SK-N-SH (cell line): ENCODE measurements at regions of chr11 and their contacts with region 1.

Region 1: GRCh38 chr11:124875943-124876817 is 10.9 kb downstream of the ROBO3 start:
- DNase-seq: peak; percentile 96
- H3K4me3 ChIP-seq: peak overlapping the region; percentile 73 to 80
- H3K27ac ChIP-seq: peak overlapping the region; percentile 93 to 94
- H3K4me1 ChIP-seq: peaks cover 0 to 17% of the 10 kb centered on the region in 2 experiments; a peak in 1 of 4 replicates
- H3K27me3 ChIP-seq: no peaks in the 10 kb centered on the region
- CTCF ChIP-seq: peak; percentile 75
- EP300 ChIP-seq: no peak
- RAD21 ChIP-seq: peak; percentile 32; the same call in 1 of the 2 replicates

Region 2: GRCh38 chr11:124821995-124822730 is 54.0 kb before region 1 on chr11:
- CTCF ChIA-PET with region 1: no interaction called
- POLR2A ChIA-PET with region 1: no interaction called
- DNase-seq: no peak
- H3K4me3 ChIP-seq: no peak overlapping the region
- H3K27ac ChIP-seq: no peak overlapping the region
- H3K4me1 ChIP-seq: no peaks in the 10 kb centered on the region
- H3K27me3 ChIP-seq: no peaks in the 10 kb centered on the region; the same call in 1 of the 2 replicates
- CTCF ChIP-seq: no peak
- EP300 ChIP-seq: no peak
- RAD21 ChIP-seq: no peak

Region 3: GRCh38 chr11:124891373-124891861 is 15.2 kb after region 1 on chr11:
- CTCF ChIA-PET with region 1: interaction called, 23 read pairs
- POLR2A ChIA-PET with region 1: interaction called, 3 read pairs
- DNase-seq: peak; percentile 41
- H3K4me3 ChIP-seq: no peak overlapping the region
- H3K27ac ChIP-seq: no peak overlapping the region
- H3K4me1 ChIP-seq: no peaks in the 10 kb centered on the region
- H3K27me3 ChIP-seq: no peaks in the 10 kb centered on the region
- CTCF ChIP-seq: no peak
- EP300 ChIP-seq: no peak
- RAD21 ChIP-seq: no peak

Region 4: DNA sequence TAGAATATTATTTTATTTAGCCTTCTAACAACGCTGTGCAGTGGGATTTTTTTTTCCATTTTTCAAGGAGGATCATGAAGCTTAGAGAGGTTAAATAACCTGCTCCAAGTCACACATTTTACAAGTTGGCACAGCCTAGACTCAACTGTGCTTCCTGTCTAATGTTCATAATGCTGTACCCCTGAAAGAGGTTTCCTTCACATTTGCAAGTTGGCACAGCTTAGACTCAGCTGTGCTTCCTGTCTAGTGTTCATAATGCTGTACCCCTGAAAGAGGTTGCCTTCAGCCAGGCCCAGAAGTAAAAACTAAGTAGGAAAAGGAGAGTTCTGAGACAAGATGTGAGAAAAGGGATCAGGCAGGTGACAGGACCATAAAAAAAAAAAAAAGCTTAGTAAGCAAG is 67.6 kb after region 1 on chr11:
- CTCF ChIA-PET with region 1: no interaction called
- POLR2A ChIA-PET with region 1: no interaction called
- DNase-seq: no peak
- H3K4me3 ChIP-seq: no peak overlapping the region
- H3K27ac ChIP-seq: no peak overlapping the region
- H3K4me1 ChIP-seq: no peaks in the 10 kb centered on the region; a peak in 1 of 4 replicates
- H3K27me3 ChIP-seq: no peaks in the 10 kb centered on the region
- CTCF ChIP-seq: no peak
- EP300 ChIP-seq: no peak
- RAD21 ChIP-seq: no peak

Region 5: GRCh38 chr11:124953753-124954589 is 77.8 kb after region 1 on chr11 and contains the start of gene CCDC15:
- CTCF ChIA-PET with region 1: interaction called, 16 read pairs
- POLR2A ChIA-PET with region 1: interaction called, 15 read pairs
- DNase-seq: peak; percentile 90
- H3K4me3 ChIP-seq: peak within 1 kb of the TSS; percentile 84 to 86
- H3K27ac ChIP-seq: peak within 1 kb of the TSS; percentile 84 to 97
- H3K4me1 ChIP-seq: peaks cover 6 to 7% of the 10 kb centered on the region in 2 experiments; a peak in 3 of 4 replicates
- H3K27me3 ChIP-seq: no peaks in the 10 kb centered on the region
- CTCF ChIP-seq: no peak
- EP300 ChIP-seq: no peak
- RAD21 ChIP-seq: no peak; the same call in 1 of the 2 replicates
- polyA plus RNA-seq, gene CCDC15: 0.69 and 0.91 TPM in 2 replicates

Region 6: DNA sequence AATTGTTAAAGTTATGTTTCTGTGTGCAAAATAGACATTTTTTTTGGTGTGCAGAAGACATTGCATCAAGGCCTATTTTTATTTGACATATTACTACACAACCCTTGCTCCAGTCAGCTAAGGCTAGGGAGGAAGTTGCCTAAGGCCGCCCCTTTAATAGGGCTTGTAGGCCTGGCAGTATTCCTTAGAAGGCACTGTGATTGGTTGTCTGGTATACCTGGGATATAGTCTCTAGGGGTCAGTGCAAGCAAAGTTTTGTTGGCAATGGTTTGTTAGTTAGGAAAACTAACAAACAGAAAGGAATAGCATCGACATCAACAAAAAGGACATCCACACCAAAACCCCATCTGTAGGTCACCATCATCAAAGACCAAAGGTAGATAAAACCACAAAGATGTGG is 94.7 kb after region 1 on chr11:
- CTCF ChIA-PET with region 1: no interaction called
- POLR2A ChIA-PET with region 1: no interaction called
- DNase-seq: peak; percentile 5
- H3K4me3 ChIP-seq: no peak overlapping the region
- H3K27ac ChIP-seq: no peak overlapping the region
- H3K4me1 ChIP-seq: no peaks in the 10 kb centered on the region
- H3K27me3 ChIP-seq: no peaks in the 10 kb centered on the region
- CTCF ChIP-seq: 0 out of 2 replicates have a peak, but pooled peaks have one; percentile 10
- EP300 ChIP-seq: no peak
- RAD21 ChIP-seq: no peak